PC-3 (cell line): ENCODE measurements at regions of chr6 and their contacts with region 1.

Region 1: DNA sequence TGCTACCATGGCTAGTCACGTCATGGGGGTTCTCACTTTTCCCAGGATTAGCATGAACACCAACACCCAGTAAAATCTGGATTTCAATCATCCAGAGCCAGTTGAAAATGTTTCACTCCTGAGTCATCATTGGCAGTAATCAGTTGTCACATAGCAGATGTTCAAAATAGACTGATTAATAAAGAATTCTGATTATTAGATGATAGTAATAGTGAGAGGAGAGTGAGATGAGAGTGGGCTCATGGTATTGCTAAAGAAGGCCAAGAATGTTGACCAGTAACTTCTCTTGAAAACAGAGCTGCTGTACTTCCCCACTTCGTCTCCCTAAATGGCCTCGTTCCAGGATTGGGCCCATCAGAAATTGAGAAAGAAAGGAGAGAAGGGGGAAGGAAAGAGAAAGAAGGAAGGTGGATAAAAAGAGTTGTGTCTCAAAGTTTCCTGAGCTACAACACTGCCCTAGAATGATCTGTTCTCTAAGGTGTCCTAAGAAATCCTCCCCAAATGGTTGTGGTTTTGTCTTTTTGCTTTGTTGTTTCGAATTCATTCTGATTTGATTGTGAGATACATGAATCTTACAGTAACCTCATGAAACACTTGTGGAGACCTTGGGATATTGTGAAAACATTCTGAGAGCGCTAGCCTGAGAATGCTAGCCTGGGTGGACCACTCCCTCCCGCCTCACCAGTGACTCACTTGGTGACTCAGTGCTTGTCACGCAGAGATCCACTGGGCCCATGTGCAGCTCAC is 502.2 kb upstream of the JARID2 start:
- DNase-seq: peak; percentile 99
- ATAC-seq: peak; percentile 95
- H3K4me3 ChIP-seq: peak overlapping the region; percentile 18; the same call in 1 of the 2 replicates
- H3K27ac ChIP-seq: peak overlapping the region; percentile 98
- H3K4me1 ChIP-seq: peaks cover 30% of the 10 kb centered on the region
- H3K27me3 ChIP-seq: no peaks in the 10 kb centered on the region
- CTCF ChIP-seq: no peak

Region 2: DNA sequence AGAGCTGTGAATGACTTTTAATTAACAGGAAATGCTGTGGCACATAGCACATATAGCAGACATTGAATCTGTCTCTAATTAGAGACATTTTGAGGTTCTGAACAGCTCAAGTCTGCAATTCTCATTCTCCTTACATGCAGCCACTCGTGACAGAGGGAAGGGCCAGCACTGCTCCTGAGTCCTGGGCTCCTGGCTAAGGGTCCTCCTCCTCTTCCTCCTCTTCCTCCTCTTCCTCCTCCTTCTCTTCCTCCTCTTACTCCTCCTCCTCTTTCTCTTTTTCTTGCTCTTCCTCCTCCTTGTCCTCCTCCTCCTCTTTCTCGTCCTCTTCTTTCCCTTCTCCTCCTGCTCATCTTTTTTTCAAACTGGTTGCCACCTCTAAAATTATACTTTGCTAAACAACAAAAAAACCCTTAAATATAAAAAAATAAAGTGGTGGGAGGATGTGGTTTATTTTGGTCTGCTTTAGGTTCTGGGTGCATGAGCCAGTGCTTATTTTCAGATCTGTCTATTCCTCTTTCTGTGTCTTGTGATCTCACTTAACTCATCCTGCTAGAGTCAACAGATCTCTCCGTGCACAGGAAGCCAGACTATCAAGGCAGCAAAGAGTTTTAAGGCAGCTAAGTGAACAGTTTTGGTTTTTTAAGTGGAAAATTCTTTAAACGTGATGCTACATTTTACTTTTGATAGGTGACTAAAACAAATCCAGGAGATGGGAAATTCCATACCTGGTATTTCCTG is 466.8 kb before region 1 on chr6:
- CTCF ChIA-PET with region 1: no interaction called
- POLR2A ChIA-PET with region 1: no interaction called
- intact Hi-C with region 1: loop called (anchors 10 kb)
- DNase-seq: no peak
- ATAC-seq: 0 out of 2 replicates have a peak, but pooled peaks have one; percentile 24
- H3K4me3 ChIP-seq: no peak overlapping the region
- H3K27ac ChIP-seq: no peak overlapping the region
- H3K4me1 ChIP-seq: peaks cover 36% of the 10 kb centered on the region
- H3K27me3 ChIP-seq: no peaks in the 10 kb centered on the region
- CTCF ChIP-seq: no peak

Region 3: GRCh38 chr6:14584450-14584849 is 159.2 kb before region 1 on chr6:
- CTCF ChIA-PET with region 1: no interaction called
- POLR2A ChIA-PET with region 1: no interaction called
- intact Hi-C with region 1: no loop called
- DNase-seq: peak; percentile 48
- ATAC-seq: peak; percentile 73
- H3K4me3 ChIP-seq: no peak overlapping the region
- H3K27ac ChIP-seq: no peak overlapping the region
- H3K4me1 ChIP-seq: no peaks in the 10 kb centered on the region
- H3K27me3 ChIP-seq: no peaks in the 10 kb centered on the region
- CTCF ChIP-seq: peak; percentile 48

Region 4: DNA sequence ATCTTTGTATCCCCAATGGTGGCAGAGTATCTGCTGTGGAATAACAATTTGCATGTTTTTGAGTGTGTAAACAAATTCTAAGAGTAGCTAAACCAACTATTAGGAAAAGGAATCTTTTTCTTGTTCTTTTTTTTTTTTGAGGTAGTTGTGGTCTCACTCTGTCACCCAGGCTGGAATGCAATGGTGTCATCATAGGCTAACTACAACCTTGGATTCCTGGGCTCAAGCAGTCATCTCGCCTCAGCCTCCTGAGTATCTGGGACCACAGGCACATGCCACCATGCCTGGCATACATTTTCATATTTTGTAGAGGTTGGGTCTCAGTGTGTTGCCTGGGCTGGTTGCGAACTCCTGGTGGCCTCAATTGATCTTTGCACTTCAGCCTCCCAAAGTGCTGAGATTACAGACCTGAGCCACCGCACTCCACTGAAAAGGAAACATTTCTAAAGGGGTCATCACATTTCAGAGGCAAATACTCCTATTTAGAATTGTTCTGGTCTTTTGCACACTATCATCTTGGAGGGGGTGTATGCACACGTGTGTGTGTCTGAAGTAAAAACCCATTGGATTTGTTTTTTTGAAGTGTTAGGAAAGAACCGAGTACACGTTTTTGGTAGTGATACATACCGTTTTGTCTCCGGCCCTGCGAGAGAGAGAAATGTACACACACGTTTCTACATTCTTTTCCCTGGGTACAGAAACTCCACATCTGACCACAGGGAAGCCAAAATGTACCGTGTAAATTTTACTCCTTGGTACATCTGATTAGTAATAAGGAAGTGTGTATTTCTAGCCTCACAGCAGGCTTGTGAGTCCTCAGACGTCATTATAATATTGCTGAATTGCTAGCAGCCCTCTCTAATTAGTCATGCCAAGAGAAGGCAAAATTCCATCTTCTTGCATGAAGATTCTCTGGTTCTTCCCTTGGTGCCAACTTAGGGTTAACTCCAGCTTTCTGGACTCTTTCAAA is 685.8 kb after region 1 on chr6:
- CTCF ChIA-PET with region 1: no interaction called
- POLR2A ChIA-PET with region 1: interaction called, 10 read pairs
- intact Hi-C with region 1: no loop called
- DNase-seq: no peak
- ATAC-seq: no peak
- H3K4me3 ChIP-seq: no peak overlapping the region
- H3K27ac ChIP-seq: no peak overlapping the region
- H3K4me1 ChIP-seq: peaks cover 33% of the 10 kb centered on the region
- H3K27me3 ChIP-seq: no peaks in the 10 kb centered on the region
- CTCF ChIP-seq: no peak

Region 5: DNA sequence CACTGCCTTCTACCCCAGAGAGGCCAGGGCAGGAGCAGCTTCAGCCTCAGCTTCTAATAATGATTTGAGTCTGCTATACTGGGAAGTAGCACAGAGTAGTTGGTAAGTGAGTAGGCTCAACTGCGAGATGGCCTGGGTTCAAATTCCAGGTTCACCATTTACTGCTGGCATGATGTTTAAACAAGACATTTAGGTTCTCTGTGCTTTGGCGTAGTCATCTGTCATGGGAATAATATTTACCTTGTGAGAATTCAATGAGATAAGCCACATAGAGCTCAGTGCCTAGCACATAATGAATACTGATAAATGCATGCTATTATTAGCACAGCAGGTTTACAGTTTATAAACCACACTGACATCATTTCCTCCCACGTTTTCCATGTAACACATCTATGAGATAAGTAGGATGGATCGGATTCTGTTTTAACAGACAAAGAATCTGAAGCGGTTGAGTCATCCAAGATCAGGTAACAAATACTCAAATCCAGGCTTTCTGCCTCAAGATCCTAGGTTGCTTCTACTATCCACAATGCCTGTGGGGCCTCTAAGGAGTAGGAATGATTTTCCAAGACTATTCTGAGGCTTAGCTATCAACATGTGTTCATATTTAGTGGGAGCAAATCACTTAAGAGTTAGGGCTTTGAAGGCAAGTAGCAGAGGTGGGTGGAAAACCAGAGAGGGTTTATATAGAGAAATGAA is 992.1 kb after region 1 on chr6:
- CTCF ChIA-PET with region 1: no interaction called
- POLR2A ChIA-PET with region 1: no interaction called
- intact Hi-C with region 1: no loop called
- DNase-seq: peak; percentile 64
- ATAC-seq: peak; percentile 38
- H3K4me3 ChIP-seq: no peak overlapping the region
- H3K27ac ChIP-seq: 0 out of 2 replicates have a peak overlapping the region, but pooled peaks have one; percentile 21
- H3K4me1 ChIP-seq: peaks cover 8% of the 10 kb centered on the region
- H3K27me3 ChIP-seq: peaks cover 23% of the 10 kb centered on the region; the same call in 1 of the 2 replicates
- CTCF ChIP-seq: no peak